Left cardiac atrium (tissue), 4 donors: ENCODE measurements at regions of chr3 and their contacts with region 1.

Region 1: GRCh38 chr3:49566312-49566711 is 12.0 kb downstream of the BSN start:
- DNase-seq: no peak
- ATAC-seq: no peak

Region 2: GRCh38 chr3:49626101-49626581 is 59.8 kb after region 1 on chr3:
- intact Hi-C with region 1: loop called in 1 of 2 experiments (anchors 10 kb)
- DNase-seq: no peak
- ATAC-seq: no peak